Heart right ventricle (tissue), 16 donors: ENCODE measurements at regions of chr3 and their contacts with region 1.

Region 1: GRCh38 chr3:58532794-58533220 is 4.2 kb downstream of the ACOX2 start:
- DNase-seq: peak; percentile 51 to 75
- ATAC-seq: peak; percentile 40 to 61 (median 50)
- H3K4me3 ChIP-seq: no peak overlapping the region
- H3K27ac ChIP-seq: no peak overlapping the region
- H3K4me1 ChIP-seq: peaks cover 14 to 51% (median 39%) of the 10 kb centered on the region in 9 donors
- H3K27me3 ChIP-seq: no peaks in the 10 kb centered on the region
- CTCF ChIP-seq: peak; percentile 78 to 95 (median 91)

Region 2: DNA sequence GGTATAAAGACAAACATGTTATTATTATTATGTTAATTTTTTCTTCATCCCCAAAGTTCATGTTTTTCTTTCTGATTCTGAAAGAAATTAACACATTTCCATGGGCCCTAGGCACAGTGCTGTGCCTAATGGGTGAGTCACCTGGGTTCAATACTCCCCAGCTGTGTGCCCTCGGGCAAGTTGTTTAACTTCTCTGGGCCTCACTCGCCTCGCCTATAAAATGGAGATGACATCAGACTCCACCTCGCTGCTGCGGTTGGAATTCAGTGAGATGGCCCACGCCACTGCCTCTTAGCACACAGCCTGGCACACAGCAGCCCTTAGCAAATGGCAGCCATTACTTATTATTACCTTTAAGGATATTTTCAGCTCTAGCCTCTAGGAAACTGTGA is 344.6 kb before region 1 on chr3:
- intact Hi-C with region 1: loop called in 1 of 10 experiments (anchors 10 kb)
- DNase-seq: no peak
- ATAC-seq: no peak
- H3K4me3 ChIP-seq: no peak overlapping the region
- H3K27ac ChIP-seq: peak overlapping the region in 5 of 10 donors; percentile 33 to 59 (median 50)
- H3K4me1 ChIP-seq: peaks cover 0 to 26% (median 18%) of the 10 kb centered on the region in 9 donors
- H3K27me3 ChIP-seq: no peaks in the 10 kb centered on the region
- CTCF ChIP-seq: no peak

Region 3: DNA sequence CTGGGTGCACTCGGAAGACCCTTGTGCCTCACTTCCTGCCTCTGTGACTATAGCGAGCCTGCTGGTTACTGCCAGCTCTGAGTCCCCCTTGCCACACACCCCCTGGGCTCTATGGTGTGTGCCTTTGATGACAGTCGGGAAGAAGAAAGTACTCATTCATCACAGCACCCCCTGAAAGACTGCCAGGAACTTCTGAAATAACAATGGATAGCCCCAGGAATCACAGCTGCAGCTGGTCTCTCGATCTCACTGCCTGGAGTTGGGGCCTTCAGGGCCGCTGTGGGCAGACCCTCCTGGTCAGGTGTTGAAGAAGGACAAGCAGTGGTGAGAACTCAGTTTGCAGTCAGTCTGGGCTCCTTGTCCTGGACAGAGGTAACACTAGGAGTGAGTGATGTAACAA is 236.5 kb before region 1 on chr3:
- intact Hi-C with region 1: no loop called
- DNase-seq: no peak
- ATAC-seq: peak in 1 of 8 donors; percentile 8
- H3K4me3 ChIP-seq: no peak overlapping the region
- H3K27ac ChIP-seq: no peak overlapping the region
- H3K4me1 ChIP-seq: peaks cover 0 to 11% (median 0%) of the 10 kb centered on the region in 9 donors
- H3K27me3 ChIP-seq: peaks cover 0 to 9% (median 0%) of the 10 kb centered on the region in 7 donors
- CTCF ChIP-seq: no peak

Region 4: GRCh38 chr3:58317811-58318210 is 215.0 kb before region 1 on chr3:
- intact Hi-C with region 1: loop called in 6 of 10 experiments (anchors 5 to 10 kb)
- DNase-seq: no peak
- ATAC-seq: no peak
- H3K4me3 ChIP-seq: no peak overlapping the region
- H3K27ac ChIP-seq: peak overlapping the region in 1 of 10 donors; percentile 13
- H3K4me1 ChIP-seq: peaks cover 3 to 21% (median 13%) of the 10 kb centered on the region in 9 donors
- H3K27me3 ChIP-seq: no peaks in the 10 kb centered on the region
- CTCF ChIP-seq: no peak

Region 5: GRCh38 chr3:58332575-58333188 is 200.1 kb before region 1 on chr3 and contains the start of gene PXK:
- intact Hi-C with region 1: loop called in 4 of 10 experiments (anchors 5 to 10 kb)
- DNase-seq: peak; percentile 78 to 85
- ATAC-seq: peak; percentile 93 to 98 (median 96)
- H3K4me3 ChIP-seq: peak within 1 kb of the TSS; percentile 61 to 95 (median 79)
- H3K27ac ChIP-seq: peak within 1 kb of the TSS in 9 of 10 donors; percentile 43 to 89 (median 70)
- H3K4me1 ChIP-seq: peaks cover 3 to 41% (median 19%) of the 10 kb centered on the region in 9 donors
- H3K27me3 ChIP-seq: no peaks in the 10 kb centered on the region
- CTCF ChIP-seq: peak in 5 of 9 donors; percentile 6 to 42 (median 21)
- total RNA-seq, gene PXK: 7.9 to 16.3 (median 11.7) TPM

Region 6: DNA sequence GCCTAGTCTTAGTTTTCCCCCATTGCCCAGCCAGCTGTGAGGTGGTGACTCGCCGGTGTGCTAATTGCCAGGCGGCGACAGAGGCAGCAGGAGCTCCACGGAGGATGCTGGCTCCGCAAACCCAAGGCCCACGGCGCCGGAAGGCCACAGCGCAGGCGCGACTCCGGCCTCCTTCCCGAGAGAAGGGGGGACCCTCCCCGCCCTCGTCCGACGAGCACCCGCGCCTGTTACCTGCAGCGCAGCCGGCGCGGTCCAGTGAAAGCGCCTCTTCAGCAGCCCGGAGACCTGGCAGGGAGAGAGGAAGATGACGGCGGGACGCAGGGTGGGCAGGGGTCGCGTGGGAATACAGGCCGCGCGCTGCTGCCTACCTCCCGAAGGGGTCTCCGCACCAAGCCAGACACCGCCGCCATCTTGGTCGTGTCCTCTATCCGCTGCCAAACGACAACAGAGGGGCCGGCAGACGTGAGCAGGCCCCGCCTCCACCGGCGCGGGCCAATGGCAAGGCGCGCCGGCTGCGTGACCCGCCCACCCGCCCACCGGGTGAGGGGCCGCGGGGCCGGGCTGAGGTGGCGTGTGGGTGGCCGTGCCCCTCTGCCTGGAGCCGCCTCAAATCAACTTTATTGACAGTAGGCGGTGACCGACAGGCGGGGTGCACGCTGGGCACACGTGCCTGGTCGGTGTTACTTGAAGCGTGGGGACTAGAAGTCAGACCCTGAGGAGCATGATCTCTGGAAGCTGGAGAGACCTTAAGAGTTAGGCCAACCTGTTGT is 99.2 kb before region 1 on chr3 and contains the start of gene PDHB:
- intact Hi-C with region 1: loop called in 3 of 10 experiments (anchors 10 kb)
- DNase-seq: peak; percentile 92 to 95
- ATAC-seq: peak; percentile 97 to 99 (median 98)
- H3K4me3 ChIP-seq: peak within 1 kb of the TSS; percentile 42 to 93 (median 72)
- H3K27ac ChIP-seq: peak within 1 kb of the TSS; percentile 75 to 98 (median 96)
- H3K4me1 ChIP-seq: peaks cover 0 to 34% (median 30%) of the 10 kb centered on the region in 9 donors
- H3K27me3 ChIP-seq: no peaks in the 10 kb centered on the region
- CTCF ChIP-seq: peak in 2 of 9 donors; percentile 9 to 21
- total RNA-seq, gene PDHB: 170 to 255 (median 217) TPM

Region 7: GRCh38 chr3:58491506-58492402 is 41.1 kb before region 1 on chr3 and contains the start of gene KCTD6:
- intact Hi-C with region 1: loop called in 4 of 10 experiments (anchors 1 to 5 kb)
- DNase-seq: peak; percentile 93 to 96
- ATAC-seq: peak; percentile 96 to 98 (median 98)
- H3K4me3 ChIP-seq: peak within 1 kb of the TSS; percentile 26 to 96 (median 80)
- H3K27ac ChIP-seq: peak within 1 kb of the TSS; percentile 72 to 94 (median 82)
- H3K4me1 ChIP-seq: peaks cover 5 to 73% (median 50%) of the 10 kb centered on the region in 9 donors
- H3K27me3 ChIP-seq: no peaks in the 10 kb centered on the region
- CTCF ChIP-seq: peak; percentile 61 to 90 (median 78)
- total RNA-seq, gene KCTD6: 3.6 to 8.9 (median 7.2) TPM

Region 8: GRCh38 chr3:58659051-58659675 is 126.4 kb after region 1 on chr3:
- intact Hi-C with region 1: no loop called
- DNase-seq: peak in 1 of 2 donors; percentile 20
- ATAC-seq: peak in 6 of 8 donors; percentile 27 to 55 (median 45)
- H3K4me3 ChIP-seq: no peak overlapping the region
- H3K27ac ChIP-seq: no peak overlapping the region
- H3K4me1 ChIP-seq: no peaks in the 10 kb centered on the region
- H3K27me3 ChIP-seq: peaks cover 0 to 10% (median 0%) of the 10 kb centered on the region in 7 donors
- CTCF ChIP-seq: peak in 6 of 9 donors; percentile 26 to 44 (median 35)

Region 9: DNA sequence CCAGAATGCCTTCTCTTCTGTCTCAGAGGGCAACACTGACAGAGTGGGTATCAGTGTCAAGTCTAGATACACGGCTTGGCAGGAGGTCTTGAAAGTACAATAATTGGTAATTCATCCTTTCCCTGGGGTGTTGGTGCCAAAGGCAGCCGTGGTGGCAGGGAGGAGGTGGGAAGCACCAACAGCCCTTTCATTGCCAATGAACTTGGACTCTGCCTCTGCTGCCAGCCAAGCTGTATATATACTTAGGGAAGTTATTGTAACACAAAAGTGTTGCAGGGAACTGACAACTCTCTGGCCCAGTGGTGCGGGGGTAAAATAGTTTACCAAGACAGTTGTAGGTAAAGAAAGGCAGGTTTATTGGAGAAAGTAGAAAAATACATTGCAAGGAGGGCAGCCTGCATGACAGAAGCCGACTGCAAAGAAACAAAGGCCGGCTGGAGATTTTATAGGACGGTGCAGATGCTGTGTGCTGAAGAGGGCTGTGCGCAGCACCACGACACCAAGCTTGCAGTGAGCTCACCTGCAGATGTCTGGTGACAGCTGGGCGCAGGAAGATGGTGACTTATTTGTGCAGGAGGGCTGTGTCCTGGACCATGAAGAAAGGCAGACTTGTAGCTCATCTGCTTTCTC is 137.8 kb after region 1 on chr3:
- intact Hi-C with region 1: no loop called
- DNase-seq: no peak
- ATAC-seq: no peak
- H3K4me3 ChIP-seq: no peak overlapping the region
- H3K27ac ChIP-seq: no peak overlapping the region
- H3K4me1 ChIP-seq: peaks cover 0 to 10% (median 0%) of the 10 kb centered on the region in 9 donors
- H3K27me3 ChIP-seq: no peaks in the 10 kb centered on the region
- CTCF ChIP-seq: no peak